CD4-positive, alpha-beta memory T cell (primary cell): ENCODE measurements at regions of chr3 and their contacts with region 1.

Region 1: DNA sequence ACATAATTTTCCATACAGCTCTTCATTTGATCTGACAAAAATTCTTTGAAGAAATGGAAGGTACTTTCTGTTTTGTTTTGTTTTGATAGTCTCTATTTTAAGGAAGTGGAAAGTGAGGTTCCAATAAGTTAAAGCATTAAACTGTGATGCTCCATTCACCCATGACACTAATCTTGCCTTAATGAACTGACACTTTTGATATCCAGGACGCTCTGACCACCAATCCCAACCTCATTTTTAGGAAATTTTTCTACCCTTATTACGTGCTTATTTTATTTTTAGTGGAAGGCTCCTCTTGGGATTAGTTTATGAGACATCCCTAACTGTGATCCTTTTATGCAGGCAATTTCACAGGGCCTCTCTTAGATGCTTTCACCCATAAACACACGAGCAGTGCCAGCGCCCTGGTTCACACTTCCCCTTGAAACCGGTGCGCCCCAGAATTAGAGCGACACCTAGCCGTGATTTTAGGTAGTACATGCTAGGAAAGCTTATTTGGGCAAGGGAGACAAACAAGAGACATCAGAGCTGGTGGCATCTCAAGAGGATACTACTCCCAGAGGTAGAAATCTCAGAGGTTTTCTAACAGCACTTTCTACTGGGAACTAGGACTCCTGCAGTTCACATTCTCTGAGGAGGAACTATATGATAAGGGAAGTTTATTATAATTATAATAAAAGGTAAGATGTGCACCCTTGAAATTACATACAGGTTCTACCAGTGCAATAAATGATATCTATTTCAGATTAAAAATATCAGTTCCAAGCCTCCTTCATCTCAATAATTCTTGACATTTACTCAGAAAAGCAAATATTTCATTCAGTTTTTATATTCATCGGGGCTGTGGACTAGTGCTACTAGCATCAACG is 173.9 kb downstream of the SLC9A9 start:
- DNase-seq: peak; percentile 60 to 73 (median 64)
- H3K4me3 ChIP-seq: no peak overlapping the region
- H3K4me3 Mint-ChIP-seq: peak overlapping the region in 6 of 8 donors; percentile 18 to 70 (median 34)
- H3K27ac ChIP-seq: no peak overlapping the region
- H3K27ac Mint-ChIP-seq: peak overlapping the region in 3 of 7 donors; percentile 31 to 56 (median 43)
- H3K4me1 ChIP-seq: peaks cover 6% of the 10 kb centered on the region
- H3K4me1 Mint-ChIP-seq: peaks cover 6 to 11% (median 8%) of the 10 kb centered on the region in 4 donors
- H3K27me3 ChIP-seq: no peaks in the 10 kb centered on the region
- H3K27me3 Mint-ChIP-seq: no peaks in the 10 kb centered on the region

Region 2: DNA sequence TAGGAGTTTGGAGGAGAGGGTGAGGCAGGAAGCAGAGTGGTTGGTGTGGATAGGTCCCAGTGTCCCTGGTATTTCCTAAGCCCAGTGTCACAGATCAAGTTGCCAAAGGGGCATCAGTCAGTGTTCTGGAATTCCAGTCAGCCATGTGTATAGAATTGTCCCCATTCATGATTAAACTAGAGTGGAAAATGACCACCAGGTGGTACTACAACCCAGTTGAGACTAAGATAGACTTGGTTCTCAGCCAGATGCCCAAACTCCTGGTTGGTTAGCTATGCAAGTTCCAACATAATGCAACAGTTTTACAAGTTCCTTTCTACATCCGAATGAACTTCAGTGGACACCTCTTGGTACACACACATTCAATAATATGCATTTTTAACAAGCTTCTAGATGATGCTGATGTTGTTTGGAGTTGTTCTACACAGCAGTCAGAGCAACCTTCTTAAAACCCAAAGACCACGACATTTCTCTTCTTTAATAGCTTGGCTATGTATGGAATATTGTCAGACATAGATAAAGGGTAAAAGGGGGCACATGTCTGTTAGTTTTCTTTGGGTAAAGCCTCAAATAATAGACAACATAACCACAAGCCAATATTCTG is 1087.4 kb before region 1 on chr3:
- CTCF ChIA-PET with region 1: no interaction called
- POLR2A ChIA-PET with region 1: no interaction called
- intact Hi-C with region 1: loop called (anchors 10 kb)
- DNase-seq: peak in 4 of 5 donors; percentile 39 to 53 (median 46)
- H3K4me3 ChIP-seq: no peak overlapping the region
- H3K4me3 Mint-ChIP-seq: no peak overlapping the region
- H3K27ac ChIP-seq: no peak overlapping the region
- H3K27ac Mint-ChIP-seq: no peak overlapping the region
- H3K4me1 ChIP-seq: no peaks in the 10 kb centered on the region
- H3K4me1 Mint-ChIP-seq: no peaks in the 10 kb centered on the region
- H3K27me3 ChIP-seq: no peaks in the 10 kb centered on the region
- H3K27me3 Mint-ChIP-seq: peaks cover 11 to 14% of the 10 kb centered on the region in 2 donors

Region 3: DNA sequence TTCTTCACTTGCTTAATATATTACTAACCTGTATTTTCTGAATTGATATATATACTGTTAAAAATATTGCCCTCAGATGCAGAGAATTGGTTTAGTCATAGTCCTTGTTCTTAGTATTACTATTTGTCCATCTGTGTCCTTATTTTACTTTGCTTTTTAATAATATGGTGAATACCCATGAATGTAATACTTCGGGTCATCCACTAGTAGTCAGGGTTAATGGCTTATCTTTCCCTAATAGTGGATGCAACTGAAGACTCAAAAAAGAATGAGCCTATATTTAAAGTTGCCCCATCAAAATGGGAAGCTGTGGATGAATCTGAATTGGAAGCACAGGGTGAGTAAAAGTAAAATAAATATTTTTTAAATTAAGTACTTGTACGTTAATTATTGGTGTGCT is 636.5 kb before region 1 on chr3:
- CTCF ChIA-PET with region 1: interaction called, 5 read pairs
- POLR2A ChIA-PET with region 1: no interaction called
- intact Hi-C with region 1: loop called (anchors 10 kb)
- DNase-seq: no peak
- H3K4me3 ChIP-seq: no peak overlapping the region
- H3K4me3 Mint-ChIP-seq: no peak overlapping the region
- H3K27ac ChIP-seq: no peak overlapping the region
- H3K27ac Mint-ChIP-seq: no peak overlapping the region
- H3K4me1 ChIP-seq: peaks cover 14% of the 10 kb centered on the region
- H3K4me1 Mint-ChIP-seq: peaks cover 6 to 16% (median 13%) of the 10 kb centered on the region in 4 donors
- H3K27me3 ChIP-seq: no peaks in the 10 kb centered on the region
- H3K27me3 Mint-ChIP-seq: no peaks in the 10 kb centered on the region

Region 4: GRCh38 chr3:143661677-143662076 is 12.7 kb before region 1 on chr3:
- CTCF ChIA-PET with region 1: interaction called, 13 read pairs
- POLR2A ChIA-PET with region 1: no interaction called
- intact Hi-C with region 1: no loop called
- DNase-seq: no peak
- H3K4me3 ChIP-seq: no peak overlapping the region
- H3K4me3 Mint-ChIP-seq: no peak overlapping the region
- H3K27ac ChIP-seq: no peak overlapping the region
- H3K27ac Mint-ChIP-seq: no peak overlapping the region
- H3K4me1 ChIP-seq: no peaks in the 10 kb centered on the region
- H3K4me1 Mint-ChIP-seq: peaks cover 0 to 2% (median 0%) of the 10 kb centered on the region in 4 donors
- H3K27me3 ChIP-seq: no peaks in the 10 kb centered on the region
- H3K27me3 Mint-ChIP-seq: no peaks in the 10 kb centered on the region

Region 5: GRCh38 chr3:143685491-143685890 is 11.2 kb after region 1 on chr3:
- CTCF ChIA-PET with region 1: interaction called, 16 read pairs
- POLR2A ChIA-PET with region 1: no interaction called
- intact Hi-C with region 1: no loop called
- DNase-seq: no peak
- H3K4me3 ChIP-seq: no peak overlapping the region
- H3K4me3 Mint-ChIP-seq: no peak overlapping the region
- H3K27ac ChIP-seq: no peak overlapping the region
- H3K27ac Mint-ChIP-seq: no peak overlapping the region
- H3K4me1 ChIP-seq: no peaks in the 10 kb centered on the region
- H3K4me1 Mint-ChIP-seq: peaks cover 0 to 5% (median 4%) of the 10 kb centered on the region in 4 donors
- H3K27me3 ChIP-seq: no peaks in the 10 kb centered on the region
- H3K27me3 Mint-ChIP-seq: no peaks in the 10 kb centered on the region